ENCODE measurements at regions of chr18 and their contacts with region 1.

Region 1: GRCh38 chr18:46481048-46481846 is 175.8 kb downstream of the LOXHD1 start:
- DNase-seq: peak; percentile 80
- ATAC-seq: peak; percentile 79
- H3K4me3 Mint-ChIP-seq: no peak overlapping the region
- H3K27ac Mint-ChIP-seq: no peak overlapping the region
- H3K4me1 Mint-ChIP-seq: peaks cover 14% of the 10 kb centered on the region
- H3K27me3 Mint-ChIP-seq: 0 out of 2 replicates have a peak, but pooled peaks cover 3% of the 10 kb centered on the region
- CTCF ChIP-seq: peak; percentile 88

Region 2: GRCh38 chr18:46411867-46412690 is 69.2 kb before region 1 on chr18:
- CTCF ChIA-PET with region 1: interaction called, 13 read pairs
- POLR2A ChIA-PET with region 1: no interaction called
- DNase-seq: no peak
- ATAC-seq: no peak
- H3K4me3 Mint-ChIP-seq: no peak overlapping the region
- H3K27ac Mint-ChIP-seq: peak overlapping the region; percentile 10; the same call in 1 of the 2 replicates
- H3K4me1 Mint-ChIP-seq: peaks cover 58% of the 10 kb centered on the region
- H3K27me3 Mint-ChIP-seq: no peaks in the 10 kb centered on the region
- CTCF ChIP-seq: no peak

Region 3: DNA sequence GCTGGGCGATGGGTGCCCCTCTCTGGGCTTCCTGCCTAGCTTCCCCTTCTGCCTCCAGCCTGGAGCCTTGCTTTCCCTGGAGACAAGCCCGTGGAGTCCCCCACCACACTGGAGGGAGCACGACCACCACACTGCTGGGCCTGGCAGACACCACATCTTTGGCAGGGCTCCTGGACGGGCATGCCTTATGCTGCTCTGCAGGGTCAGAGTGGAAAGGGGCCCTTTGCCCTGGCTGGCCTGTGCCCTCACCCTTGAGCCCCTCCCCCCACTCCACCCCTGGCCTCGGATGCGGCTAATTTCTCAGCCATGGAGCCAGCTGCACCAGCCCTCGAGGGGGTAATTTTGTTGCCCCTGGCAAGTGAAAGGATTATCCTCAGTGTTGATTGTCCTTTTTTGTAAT is 18.7 kb before region 1 on chr18:
- CTCF ChIA-PET with region 1: interaction called, 15 read pairs
- POLR2A ChIA-PET with region 1: no interaction called
- DNase-seq: no peak
- ATAC-seq: no peak
- H3K4me3 Mint-ChIP-seq: no peak overlapping the region
- H3K27ac Mint-ChIP-seq: no peak overlapping the region
- H3K4me1 Mint-ChIP-seq: peaks cover 61% of the 10 kb centered on the region
- H3K27me3 Mint-ChIP-seq: peaks cover 4% of the 10 kb centered on the region; the same call in 1 of the 2 replicates
- CTCF ChIP-seq: no peak

Region 4: GRCh38 chr18:46469186-46469915 is 11.9 kb before region 1 on chr18:
- CTCF ChIA-PET with region 1: interaction called, 13 read pairs
- POLR2A ChIA-PET with region 1: no interaction called
- DNase-seq: no peak
- ATAC-seq: no peak; the same call in 1 of the 2 replicates
- H3K4me3 Mint-ChIP-seq: no peak overlapping the region
- H3K27ac Mint-ChIP-seq: no peak overlapping the region; the same call in 1 of the 2 replicates
- H3K4me1 Mint-ChIP-seq: peaks cover 41% of the 10 kb centered on the region
- H3K27me3 Mint-ChIP-seq: peaks cover 4% of the 10 kb centered on the region; the same call in 1 of the 2 replicates
- CTCF ChIP-seq: no peak

Region 5: GRCh38 chr18:46518438-46518837 is 37.2 kb after region 1 on chr18:
- CTCF ChIA-PET with region 1: interaction called, 11 read pairs
- POLR2A ChIA-PET with region 1: no interaction called
- DNase-seq: peak; percentile 38
- ATAC-seq: peak; percentile 68
- H3K4me3 Mint-ChIP-seq: no peak overlapping the region
- H3K27ac Mint-ChIP-seq: no peak overlapping the region
- H3K4me1 Mint-ChIP-seq: no peaks in the 10 kb centered on the region
- H3K27me3 Mint-ChIP-seq: peaks cover 2% of the 10 kb centered on the region
- CTCF ChIP-seq: no peak